PC-9 (cell line): ENCODE measurements at regions of chr9 and their contacts with region 1.

Region 1: DNA sequence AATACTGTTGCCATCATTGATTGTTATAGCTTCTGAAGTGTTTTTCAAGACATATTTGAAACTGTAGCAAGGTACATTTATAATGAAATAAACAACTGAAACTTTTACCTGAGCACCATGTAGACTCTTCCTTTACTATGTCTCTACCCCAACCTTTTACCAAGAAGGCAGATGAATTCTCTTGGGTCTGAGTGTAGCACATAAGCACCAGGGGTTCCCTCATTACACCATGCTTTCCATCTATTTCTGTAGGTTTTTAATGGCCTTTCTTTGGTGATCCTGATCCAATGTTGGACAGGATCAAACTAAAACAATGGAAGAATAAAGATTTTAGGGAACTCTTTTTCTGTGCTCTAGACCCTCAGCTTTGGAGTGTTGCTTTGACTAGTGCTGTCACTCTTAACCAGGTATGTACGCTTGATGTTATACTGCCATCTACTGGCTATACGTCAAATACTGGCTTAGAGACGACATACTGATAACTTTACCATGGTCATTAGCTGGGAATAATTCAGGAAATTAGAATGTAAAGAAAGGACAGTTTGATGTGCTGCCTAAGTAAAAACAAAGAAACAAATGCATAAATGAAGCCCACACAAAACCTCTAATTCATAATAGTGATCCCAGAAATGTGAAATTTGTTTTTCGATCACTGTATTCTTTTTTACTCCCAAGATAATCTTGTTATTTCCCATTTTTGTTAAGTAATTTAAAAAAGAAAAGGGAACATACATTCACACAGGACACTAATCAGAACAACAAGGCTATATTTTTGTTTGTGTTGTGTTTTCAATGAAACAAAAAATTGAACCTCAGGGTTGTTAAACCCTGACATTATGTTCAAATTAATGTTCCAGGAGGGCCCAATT is 30.7 kb downstream of the IFNW1 start:
- DNase-seq: peak; percentile 4 to 45
- H3K4me3 ChIP-seq: no peak overlapping the region
- H3K27ac ChIP-seq: no peak overlapping the region
- H3K4me1 ChIP-seq: no peaks in the 10 kb centered on the region
- H3K27me3 ChIP-seq: no peaks in the 10 kb centered on the region
- CTCF ChIP-seq: peak; percentile 82

Region 2: DNA sequence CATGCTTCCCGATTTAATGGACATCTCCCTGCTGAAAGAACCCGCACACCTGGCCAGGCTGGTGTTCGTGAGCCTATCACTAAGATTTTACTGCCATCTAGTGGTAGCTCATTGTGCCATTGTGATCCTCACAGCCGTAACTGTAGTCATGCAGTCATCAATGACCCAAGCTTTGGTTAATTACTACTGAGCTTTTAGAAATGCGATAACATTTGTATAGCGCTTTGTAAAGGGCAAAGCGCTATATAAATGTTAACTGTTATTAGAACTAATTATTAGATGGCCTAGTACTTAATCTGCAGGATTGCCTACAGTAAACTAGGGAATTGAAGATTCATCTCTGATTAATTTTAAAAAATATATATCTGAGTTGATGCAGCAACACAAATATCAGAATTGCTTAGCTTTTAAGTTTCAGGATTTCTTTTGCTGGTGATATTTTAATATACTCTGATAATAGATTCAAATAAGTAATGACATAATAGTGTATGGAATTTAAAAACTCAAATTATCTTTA is 169.7 kb before region 1 on chr9:
- CTCF ChIA-PET with region 1: interaction called, 3 read pairs
- POLR2A ChIA-PET with region 1: no interaction called
- intact Hi-C with region 1: loop called (anchors 1 kb)
- DNase-seq: peak; percentile 34
- H3K4me3 ChIP-seq: no peak overlapping the region
- H3K27ac ChIP-seq: no peak overlapping the region
- H3K4me1 ChIP-seq: no peaks in the 10 kb centered on the region
- H3K27me3 ChIP-seq: no peaks in the 10 kb centered on the region
- CTCF ChIP-seq: peak; percentile 82

Region 3: GRCh38 chr9:20980832-20981455 is 130.0 kb before region 1 on chr9:
- CTCF ChIA-PET with region 1: no interaction called
- POLR2A ChIA-PET with region 1: interaction called, 18 read pairs
- intact Hi-C with region 1: no loop called
- DNase-seq: no peak
- H3K4me3 ChIP-seq: no peak overlapping the region
- H3K27ac ChIP-seq: no peak overlapping the region
- H3K4me1 ChIP-seq: no peaks in the 10 kb centered on the region
- H3K27me3 ChIP-seq: no peaks in the 10 kb centered on the region
- CTCF ChIP-seq: no peak